HCT116 (cell line): ENCODE measurements at regions of chr7 and their contacts with region 1.

Region 1: GRCh38 chr7:21253740-21254687 is 173.9 kb upstream of the SP4 start:
- DNase-seq: peak; percentile 51
- ATAC-seq: peak; percentile 93
- H3K4me3 ChIP-seq: no peak overlapping the region
- H3K27ac ChIP-seq: no peak overlapping the region
- H3K4me1 ChIP-seq: no peaks in the 10 kb centered on the region
- H3K27me3 ChIP-seq: peaks cover 25% of the 10 kb centered on the region
- CTCF ChIP-seq: peak; percentile 67 to 74 (median 70); a peak in 5 of 6 replicates
- POLR2A ChIP-seq: no peak
- RAD21 ChIP-seq: peak; percentile 81

Region 2: GRCh38 chr7:20991544-20991943 is 262.5 kb before region 1 on chr7:
- CTCF ChIA-PET with region 1: interaction called, 11 read pairs
- POLR2A ChIA-PET with region 1: no interaction called
- RAD21 ChIA-PET with region 1: no interaction called
- intact Hi-C with region 1: loop called (anchors 1 kb)
- DNase-seq: no peak
- ATAC-seq: peak; percentile 59; the same call in 1 of the 2 replicates
- H3K4me3 ChIP-seq: no peak overlapping the region
- H3K27ac ChIP-seq: no peak overlapping the region
- H3K4me1 ChIP-seq: no peaks in the 10 kb centered on the region
- H3K27me3 ChIP-seq: no peaks in the 10 kb centered on the region
- CTCF ChIP-seq: peak; percentile 37 to 54 (median 48); a peak in 3 of 6 replicates
- POLR2A ChIP-seq: no peak
- RAD21 ChIP-seq: peak; percentile 71

Region 3: DNA sequence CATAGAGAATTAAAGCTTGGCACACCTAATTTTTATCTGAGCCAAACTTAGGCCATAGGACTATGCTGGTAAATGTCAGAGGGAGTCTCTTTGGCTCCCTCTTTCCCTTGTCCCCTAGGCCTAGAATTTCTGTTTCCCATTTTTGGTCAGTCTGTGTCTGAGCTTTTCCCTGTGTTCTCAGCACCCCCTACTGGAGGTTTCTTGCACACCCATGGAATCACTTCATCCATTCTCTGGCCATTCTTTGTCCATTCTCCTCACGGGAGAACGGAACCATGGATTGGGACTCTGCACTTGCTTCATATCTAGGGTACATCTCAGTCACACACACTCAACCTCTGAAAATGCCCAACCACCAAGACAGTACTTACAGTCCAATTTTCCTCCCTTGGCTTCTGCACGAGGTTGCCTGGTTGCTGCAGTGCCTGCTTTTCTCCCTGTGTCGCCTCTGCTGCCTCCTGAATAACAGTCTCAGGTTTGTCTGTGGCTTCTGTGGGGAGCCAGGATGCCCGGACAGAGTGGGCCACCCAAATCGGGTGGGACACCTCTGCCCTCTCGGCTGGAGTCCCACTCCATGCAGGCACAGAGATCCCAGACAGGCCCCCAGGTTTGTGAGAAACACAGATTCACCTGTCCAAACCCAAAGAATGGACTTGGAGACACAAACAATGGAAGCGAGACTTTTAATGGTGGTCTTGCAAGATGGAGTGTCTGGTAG is 253.8 kb after region 1 on chr7:
- CTCF ChIA-PET with region 1: interaction called, 7 read pairs
- POLR2A ChIA-PET with region 1: no interaction called
- RAD21 ChIA-PET with region 1: no interaction called
- intact Hi-C with region 1: loop called (anchors 1 kb)
- DNase-seq: peak; percentile 4
- ATAC-seq: peak; percentile 82
- H3K4me3 ChIP-seq: no peak overlapping the region
- H3K27ac ChIP-seq: no peak overlapping the region
- H3K4me1 ChIP-seq: peaks cover 4 to 9% of the 10 kb centered on the region in 2 experiments; a peak in 3 of 4 replicates
- H3K27me3 ChIP-seq: no peaks in the 10 kb centered on the region
- CTCF ChIP-seq: peak; percentile 39 to 71 (median 68); a peak in 4 of 6 replicates
- POLR2A ChIP-seq: no peak
- RAD21 ChIP-seq: peak; percentile 71